Ovary (tissue), 10 donors: ENCODE measurements at regions of chr11 and their contacts with region 1.

Region 1: DNA sequence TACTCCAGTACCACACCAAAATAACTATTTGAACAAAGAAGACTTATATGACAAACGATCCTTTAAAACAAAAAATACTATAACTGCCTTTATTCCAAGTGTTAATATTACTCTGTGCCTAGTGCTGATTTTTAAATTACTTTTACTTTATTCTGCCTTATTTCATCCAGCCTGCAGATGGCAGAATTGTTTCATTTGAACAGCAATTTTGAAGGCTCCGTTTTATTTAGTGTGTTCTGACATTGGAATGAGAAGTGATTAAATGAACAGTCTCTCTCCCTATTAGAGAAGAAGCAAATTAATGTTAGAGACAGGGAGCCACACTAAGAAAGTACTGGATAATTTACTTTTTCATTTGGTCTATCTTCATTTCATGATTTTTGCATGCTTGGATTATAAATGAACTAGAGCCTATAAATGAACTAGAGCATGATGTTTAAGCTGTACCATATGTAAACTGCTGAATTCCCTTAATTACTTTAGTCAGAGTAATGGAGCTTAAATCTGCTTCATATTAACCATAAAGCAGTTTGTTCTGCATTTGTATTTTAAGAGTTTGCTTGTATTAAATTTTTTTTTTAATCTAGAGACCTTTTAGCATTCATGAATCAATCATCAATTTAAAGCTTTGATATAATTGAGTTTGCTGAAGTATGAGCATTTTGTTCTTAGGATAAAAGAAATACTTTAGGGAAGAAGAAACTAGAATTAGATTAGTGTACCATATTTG is 9.8 kb downstream of the PDHX start:
- DNase-seq: no peak
- H3K4me3 ChIP-seq: no peak overlapping the region
- H3K27ac ChIP-seq: no peak overlapping the region
- H3K4me1 ChIP-seq: no peaks in the 10 kb centered on the region
- H3K27me3 ChIP-seq: no peaks in the 10 kb centered on the region
- CTCF ChIP-seq: peak; percentile 34 to 72 (median 60)
- EP300 ChIP-seq: no peak
- POLR2A ChIP-seq: no peak

Region 2: DNA sequence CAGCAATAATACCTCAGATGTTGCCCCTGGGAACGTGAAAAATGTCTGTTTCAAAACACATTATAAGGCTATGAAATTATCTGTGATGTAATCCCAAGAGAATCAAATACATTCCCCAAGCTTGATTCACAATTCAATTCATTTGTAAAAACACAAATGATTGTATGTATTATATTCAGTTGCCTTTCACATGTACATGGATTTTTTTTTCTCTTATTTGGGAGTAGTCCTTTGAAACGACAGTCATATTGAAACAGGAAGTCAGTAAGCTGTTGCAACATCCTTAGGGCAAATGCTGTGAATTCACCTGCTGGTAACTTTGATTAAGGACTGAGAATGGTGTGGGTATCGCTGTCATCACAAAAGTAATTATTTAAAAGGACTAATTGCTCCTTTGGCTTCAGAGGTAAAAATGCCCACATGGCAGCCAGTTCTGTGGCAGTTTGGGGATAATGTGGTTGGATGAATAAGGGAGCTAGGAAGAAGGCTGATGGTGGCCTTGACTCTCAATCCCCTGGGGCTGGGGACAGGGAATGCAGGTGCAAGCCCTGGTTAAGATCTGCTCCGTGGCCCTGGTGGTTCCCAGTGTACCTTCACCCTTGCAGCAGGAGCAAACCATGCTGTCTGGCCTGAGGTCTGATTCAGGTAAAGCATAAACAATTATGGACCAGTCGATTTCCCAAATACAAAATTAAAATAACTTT is 292.1 kb before region 1 on chr11:
- intact Hi-C with region 1: no loop called
- DNase-seq: no peak
- H3K4me3 ChIP-seq: no peak overlapping the region
- H3K27ac ChIP-seq: no peak overlapping the region
- H3K4me1 ChIP-seq: no peaks in the 10 kb centered on the region
- H3K27me3 ChIP-seq: no peaks in the 10 kb centered on the region
- CTCF ChIP-seq: no peak
- EP300 ChIP-seq: no peak
- POLR2A ChIP-seq: no peak

Region 3: GRCh38 chr11:34791780-34792542 is 134.3 kb before region 1 on chr11:
- intact Hi-C with region 1: no loop called
- DNase-seq: no peak
- H3K4me3 ChIP-seq: no peak overlapping the region
- H3K27ac ChIP-seq: no peak overlapping the region
- H3K4me1 ChIP-seq: no peaks in the 10 kb centered on the region
- H3K27me3 ChIP-seq: no peaks in the 10 kb centered on the region
- CTCF ChIP-seq: no peak
- EP300 ChIP-seq: no peak
- POLR2A ChIP-seq: no peak

Region 4: DNA sequence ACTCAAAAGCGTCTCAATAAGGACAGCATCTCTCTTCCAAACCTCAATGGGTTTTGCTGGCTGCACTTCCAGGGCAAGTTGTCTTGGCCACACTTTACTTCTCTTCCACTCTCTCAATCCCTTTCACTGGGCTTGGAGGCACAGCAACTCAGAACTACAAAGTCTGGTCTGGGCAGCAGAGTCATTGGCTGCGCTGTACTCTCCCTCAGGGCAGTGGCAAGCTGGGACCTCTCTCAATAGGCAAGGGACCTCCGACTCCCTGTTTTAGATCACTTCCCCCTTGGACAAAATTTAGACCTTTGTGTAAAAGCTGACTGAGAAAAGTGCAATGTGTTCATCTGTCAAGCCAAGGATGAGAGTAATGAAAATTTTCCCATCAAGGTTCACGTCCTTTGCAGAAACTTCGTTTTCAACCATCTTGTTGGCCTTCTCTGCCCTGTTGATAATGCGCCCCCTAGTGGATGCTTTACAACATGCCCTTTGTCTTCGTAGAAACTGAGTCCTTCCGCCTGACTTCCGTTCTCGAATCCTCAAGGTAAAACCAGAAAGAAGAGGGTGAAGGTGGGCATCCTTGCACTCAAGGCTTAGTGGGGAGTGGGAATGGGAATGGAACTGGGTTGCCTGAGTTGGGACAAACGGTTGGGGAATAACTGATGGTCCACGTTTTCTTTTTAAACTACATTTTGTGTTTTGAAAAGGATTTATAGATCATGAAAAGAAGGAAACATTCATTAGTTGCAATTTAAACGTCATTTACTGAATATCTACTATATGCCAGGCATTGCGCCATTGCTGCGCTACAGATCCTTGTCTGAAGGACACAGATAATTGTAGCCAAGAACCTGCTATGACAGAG is 311.8 kb after region 1 on chr11:
- intact Hi-C with region 1: loop called in 1 of 4 experiments (anchors 5 kb)
- DNase-seq: peak in 2 of 5 donors; percentile 21 to 30
- H3K4me3 ChIP-seq: no peak overlapping the region
- H3K27ac ChIP-seq: no peak overlapping the region
- H3K4me1 ChIP-seq: no peaks in the 10 kb centered on the region
- H3K27me3 ChIP-seq: no peaks in the 10 kb centered on the region
- CTCF ChIP-seq: peak in 2 of 3 donors; percentile 34 to 40
- EP300 ChIP-seq: no peak
- POLR2A ChIP-seq: no peak

Region 5: DNA sequence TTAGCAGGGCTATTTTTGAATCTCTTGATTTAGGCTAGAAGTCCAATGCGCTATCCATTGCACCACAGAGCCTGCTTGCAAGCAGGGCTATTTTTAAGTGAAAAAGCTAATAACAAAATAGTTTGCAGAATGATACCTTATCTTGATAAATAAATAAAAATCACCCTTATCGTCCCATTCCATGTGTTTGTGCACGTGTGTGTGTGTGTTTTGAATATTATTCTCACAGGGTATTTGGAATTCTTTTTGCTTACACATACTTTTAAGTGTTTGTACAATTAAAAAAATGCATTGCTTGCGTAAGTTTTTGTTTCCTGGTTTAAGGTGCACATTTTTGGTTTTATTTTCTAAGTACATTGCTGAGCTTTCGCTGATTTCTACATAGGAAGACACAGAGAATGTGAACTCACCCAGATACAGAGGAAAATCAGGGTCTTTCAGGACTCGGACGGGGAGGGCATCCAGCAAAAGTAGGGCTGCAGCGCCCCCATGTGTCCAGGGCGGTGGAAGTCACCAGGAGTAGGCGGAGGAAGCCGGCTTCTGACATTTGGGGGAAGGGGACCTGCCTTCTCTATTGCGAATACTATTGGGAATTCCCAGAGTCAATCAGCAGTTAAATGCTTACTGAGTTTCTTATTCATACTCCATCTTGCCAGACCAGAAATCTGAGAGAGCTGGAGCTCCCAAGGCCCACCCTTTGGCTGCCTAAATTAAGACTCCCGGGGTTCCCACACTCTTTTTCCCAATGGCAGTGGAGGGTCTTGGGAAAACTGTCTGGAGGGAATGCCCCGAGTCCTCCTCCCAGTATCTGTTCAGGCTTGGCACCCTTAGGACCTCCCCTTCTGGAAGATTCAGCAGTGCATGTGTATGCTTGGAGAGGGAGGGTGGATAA is 465.9 kb after region 1 on chr11:
- intact Hi-C with region 1: loop called (anchors 5 to 10 kb)
- DNase-seq: peak; percentile 58 to 83 (median 74)
- H3K4me3 ChIP-seq: no peak overlapping the region
- H3K27ac ChIP-seq: no peak overlapping the region
- H3K4me1 ChIP-seq: no peaks in the 10 kb centered on the region
- H3K27me3 ChIP-seq: no peaks in the 10 kb centered on the region
- CTCF ChIP-seq: peak in 2 of 3 donors; percentile 55 to 65
- EP300 ChIP-seq: no peak
- POLR2A ChIP-seq: no peak

Region 6: GRCh38 chr11:35485656-35486322 is 559.5 kb after region 1 on chr11:
- intact Hi-C with region 1: loop called in 1 of 4 experiments (anchors 10 kb)
- DNase-seq: peak; percentile 22 to 71 (median 61)
- H3K4me3 ChIP-seq: no peak overlapping the region
- H3K27ac ChIP-seq: no peak overlapping the region
- H3K4me1 ChIP-seq: no peaks in the 10 kb centered on the region
- H3K27me3 ChIP-seq: no peaks in the 10 kb centered on the region
- CTCF ChIP-seq: peak; percentile 22 to 40 (median 30)
- EP300 ChIP-seq: no peak
- POLR2A ChIP-seq: no peak